CD4-positive, alpha-beta T cell (primary cell): ENCODE measurements at regions of chr15 and their contacts with region 1.

Region 1: GRCh38 chr15:74540761-74541493 is at the start of gene ARID3B:
- DNase-seq: peak; percentile 90 to 98 (median 94)
- ATAC-seq: peak; percentile 82
- H3K4me3 ChIP-seq: peak within 1 kb of the TSS; percentile 100
- H3K4me3 Mint-ChIP-seq: peak within 1 kb of the TSS; percentile 95
- H3K27ac ChIP-seq: peak within 1 kb of the TSS; percentile 82 to 85
- H3K27ac Mint-ChIP-seq: peak within 1 kb of the TSS; percentile 91
- H3K4me1 ChIP-seq: peaks cover 44% of the 10 kb centered on the region
- H3K4me1 Mint-ChIP-seq: peaks cover 52% of the 10 kb centered on the region
- H3K27me3 ChIP-seq: no peaks in the 10 kb centered on the region
- H3K27me3 Mint-ChIP-seq: no peaks in the 10 kb centered on the region
- CTCF ChIP-seq: no peak
- total RNA-seq, gene ARID3B: 25.0 to 27.9 TPM

Region 2: GRCh38 chr15:73991726-73992593 is 549.0 kb before region 1 on chr15 and contains the start of gene STOML1:
- CTCF ChIA-PET with region 1: no interaction called
- POLR2A ChIA-PET with region 1: no interaction called
- intact Hi-C with region 1: loop called in 1 of 2 experiments (anchors 5 kb)
- DNase-seq: peak; percentile 85 to 98 (median 94)
- ATAC-seq: peak; percentile 74
- H3K4me3 ChIP-seq: peak within 1 kb of the TSS; percentile 71
- H3K4me3 Mint-ChIP-seq: peak within 1 kb of the TSS; percentile 82
- H3K27ac ChIP-seq: peak within 1 kb of the TSS in 1 of 2 donors; percentile 47
- H3K27ac Mint-ChIP-seq: peak within 1 kb of the TSS; percentile 85
- H3K4me1 ChIP-seq: peaks cover 48% of the 10 kb centered on the region
- H3K4me1 Mint-ChIP-seq: peaks cover 51% of the 10 kb centered on the region
- H3K27me3 ChIP-seq: no peaks in the 10 kb centered on the region
- H3K27me3 Mint-ChIP-seq: no peaks in the 10 kb centered on the region
- CTCF ChIP-seq: peak; percentile 83
- total RNA-seq, gene STOML1: 4.6 to 5.3 TPM

Region 3: DNA sequence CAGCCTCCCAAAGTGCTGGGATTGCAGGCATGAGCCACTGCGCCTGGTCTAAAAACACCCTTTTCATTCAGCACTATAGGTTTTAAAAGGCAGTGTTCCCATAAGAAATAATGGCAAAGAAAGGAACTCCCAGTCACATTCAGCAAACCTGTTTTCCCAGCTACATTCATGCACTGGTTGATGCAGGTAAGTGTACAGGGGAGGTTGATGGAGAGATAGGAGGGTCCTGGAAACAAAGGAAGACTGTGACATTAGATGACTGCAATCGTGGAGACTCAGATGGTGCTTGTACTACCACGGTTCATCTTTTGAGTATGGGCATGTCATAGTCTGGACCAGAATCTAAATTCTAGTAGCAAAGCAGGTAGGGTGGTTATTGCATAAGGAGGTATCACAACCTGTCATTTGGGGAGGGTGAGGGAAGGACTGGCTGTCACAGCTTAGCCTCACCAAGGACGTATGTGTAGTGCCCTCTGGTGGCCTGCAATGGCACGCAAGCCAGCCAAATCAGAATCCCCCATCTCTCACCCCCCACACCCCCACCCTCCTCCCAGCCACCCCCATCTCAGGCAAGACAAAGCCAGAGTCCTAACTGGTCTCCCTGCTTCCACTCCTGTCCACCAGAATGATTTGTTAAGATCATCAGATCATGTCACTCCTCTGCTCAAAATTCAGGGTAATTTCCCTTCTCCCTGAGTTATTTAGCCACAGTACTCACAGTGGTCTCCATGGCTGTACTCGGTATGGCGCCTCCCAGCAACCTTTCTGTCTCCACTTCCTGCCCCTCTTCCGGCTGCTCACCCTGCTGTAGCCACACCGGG is 51.2 kb before region 1 on chr15:
- CTCF ChIA-PET with region 1: interaction called, 3 read pairs
- POLR2A ChIA-PET with region 1: no interaction called
- intact Hi-C with region 1: loop called in 1 of 2 experiments (anchors 2 kb)
- DNase-seq: peak; percentile 46 to 83 (median 61)
- ATAC-seq: peak; percentile 96
- H3K4me3 ChIP-seq: no peak overlapping the region
- H3K4me3 Mint-ChIP-seq: no peak overlapping the region
- H3K27ac ChIP-seq: no peak overlapping the region
- H3K27ac Mint-ChIP-seq: no peak overlapping the region
- H3K4me1 ChIP-seq: peaks cover 4% of the 10 kb centered on the region
- H3K4me1 Mint-ChIP-seq: peaks cover 11% of the 10 kb centered on the region
- H3K27me3 ChIP-seq: no peaks in the 10 kb centered on the region
- H3K27me3 Mint-ChIP-seq: no peaks in the 10 kb centered on the region
- CTCF ChIP-seq: peak; percentile 69

Region 4: GRCh38 chr15:74615508-74616365 is 74.8 kb after region 1 on chr15 and contains the start of gene CLK3:
- CTCF ChIA-PET with region 1: no interaction called
- POLR2A ChIA-PET with region 1: interaction called, 61 read pairs
- intact Hi-C with region 1: loop called (anchors 1 to 5 kb)
- DNase-seq: peak; percentile 92 to 99 (median 97)
- ATAC-seq: peak; percentile 70
- H3K4me3 ChIP-seq: peak within 1 kb of the TSS; percentile 100
- H3K4me3 Mint-ChIP-seq: peak within 1 kb of the TSS; percentile 94
- H3K27ac ChIP-seq: peak within 1 kb of the TSS; percentile 95 to 98
- H3K27ac Mint-ChIP-seq: peak within 1 kb of the TSS; percentile 99
- H3K4me1 ChIP-seq: peaks cover 63% of the 10 kb centered on the region
- H3K4me1 Mint-ChIP-seq: peaks cover 42% of the 10 kb centered on the region
- H3K27me3 ChIP-seq: no peaks in the 10 kb centered on the region
- H3K27me3 Mint-ChIP-seq: no peaks in the 10 kb centered on the region
- CTCF ChIP-seq: no peak
- total RNA-seq, gene CLK3: 275 to 293 TPM

Region 5: GRCh38 chr15:74842581-74843444 is 301.9 kb after region 1 on chr15 and contains the start of gene ULK3:
- CTCF ChIA-PET with region 1: no interaction called
- POLR2A ChIA-PET with region 1: no interaction called
- intact Hi-C with region 1: loop called in 1 of 2 experiments (anchors 10 kb)
- DNase-seq: peak; percentile 84 to 97 (median 92)
- ATAC-seq: peak; percentile 91
- H3K4me3 ChIP-seq: peak within 1 kb of the TSS; percentile 95
- H3K4me3 Mint-ChIP-seq: peak within 1 kb of the TSS; percentile 93
- H3K27ac ChIP-seq: peak within 1 kb of the TSS; percentile 69 to 82
- H3K27ac Mint-ChIP-seq: peak within 1 kb of the TSS; percentile 86
- H3K4me1 ChIP-seq: peaks cover 61% of the 10 kb centered on the region
- H3K4me1 Mint-ChIP-seq: peaks cover 56% of the 10 kb centered on the region
- H3K27me3 ChIP-seq: no peaks in the 10 kb centered on the region
- H3K27me3 Mint-ChIP-seq: no peaks in the 10 kb centered on the region
- CTCF ChIP-seq: peak; percentile 56
- total RNA-seq, gene ULK3: 37.8 to 38.9 TPM

Region 6: GRCh38 chr15:75639709-75640482 is 1099.0 kb after region 1 on chr15 and contains the start of gene IMP3:
- CTCF ChIA-PET with region 1: no interaction called
- POLR2A ChIA-PET with region 1: no interaction called
- intact Hi-C with region 1: loop called in 1 of 2 experiments (anchors 10 kb)
- DNase-seq: peak; percentile 84 to 97 (median 90)
- ATAC-seq: peak; percentile 90
- H3K4me3 ChIP-seq: peak within 1 kb of the TSS; percentile 95
- H3K4me3 Mint-ChIP-seq: peak within 1 kb of the TSS; percentile 89
- H3K27ac ChIP-seq: peak within 1 kb of the TSS; percentile 92
- H3K27ac Mint-ChIP-seq: peak within 1 kb of the TSS; percentile 85
- H3K4me1 ChIP-seq: peaks cover 56% of the 10 kb centered on the region
- H3K4me1 Mint-ChIP-seq: peaks cover 35% of the 10 kb centered on the region
- H3K27me3 ChIP-seq: no peaks in the 10 kb centered on the region
- H3K27me3 Mint-ChIP-seq: no peaks in the 10 kb centered on the region
- CTCF ChIP-seq: no peak
- total RNA-seq, gene IMP3: 48.4 to 50.4 TPM